ENCODE measurements at regions of chr18 and their contacts with region 1.

Region 1: GRCh38 chr18:49813319-49814146 is at the start of gene ACAA2:
- DNase-seq: peak; percentile 80
- H3K4me3 Mint-ChIP-seq: peak within 1 kb of the TSS; percentile 97
- H3K27ac Mint-ChIP-seq: peak within 1 kb of the TSS; percentile 98
- H3K4me1 Mint-ChIP-seq: peaks cover 61% of the 10 kb centered on the region
- H3K27me3 Mint-ChIP-seq: no peaks in the 10 kb centered on the region
- total RNA-seq, gene ACAA2: 74.3 and 74.6 TPM in 2 replicates

Region 2: DNA sequence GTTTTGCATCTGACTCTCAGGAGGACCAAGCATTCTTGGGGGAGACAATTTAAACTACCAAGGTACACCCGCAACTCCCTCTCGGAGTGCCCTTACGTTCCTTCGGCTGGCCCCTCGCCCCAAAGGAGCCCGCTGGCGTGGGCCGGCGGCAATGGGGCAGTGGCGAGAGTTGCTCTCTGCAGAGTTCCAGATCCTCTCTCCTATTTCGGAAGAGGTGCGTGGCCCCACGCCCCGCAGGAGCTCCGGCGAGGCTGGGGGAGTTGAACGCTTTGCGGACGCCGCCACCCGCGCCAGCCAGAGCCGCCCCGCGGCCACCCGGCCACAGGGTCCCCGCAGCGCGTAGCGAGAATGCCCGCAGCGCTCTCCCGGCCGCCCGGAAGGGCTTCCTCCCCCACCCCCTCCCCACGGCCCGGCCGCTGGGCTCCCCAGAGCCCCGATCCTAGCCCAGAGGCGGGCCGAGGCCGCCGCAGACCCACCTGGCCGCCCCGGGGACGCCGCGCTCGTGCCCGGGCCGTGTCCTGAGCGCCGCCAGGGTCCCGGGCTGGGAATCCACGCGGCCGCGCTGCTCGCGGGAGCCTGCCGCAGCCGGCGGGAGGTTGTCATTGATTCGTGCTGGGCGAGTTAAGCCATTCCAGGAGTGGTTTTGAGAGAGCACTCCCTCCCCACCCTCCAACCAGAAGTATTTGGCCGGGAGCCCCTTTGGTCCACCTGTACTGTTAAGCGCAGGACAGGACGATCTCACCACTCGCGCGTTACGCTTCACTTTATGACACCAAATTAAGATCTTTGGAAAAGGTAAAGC is 1676.8 kb before region 1 on chr18:
- intact Hi-C with region 1: loop called (anchors 10 kb)
- DNase-seq: no peak
- H3K4me3 Mint-ChIP-seq: peak overlapping the region; percentile 72
- H3K27ac Mint-ChIP-seq: peak overlapping the region; percentile 71
- H3K4me1 Mint-ChIP-seq: peaks cover 35% of the 10 kb centered on the region
- H3K27me3 Mint-ChIP-seq: peaks cover 62% of the 10 kb centered on the region

Region 3: DNA sequence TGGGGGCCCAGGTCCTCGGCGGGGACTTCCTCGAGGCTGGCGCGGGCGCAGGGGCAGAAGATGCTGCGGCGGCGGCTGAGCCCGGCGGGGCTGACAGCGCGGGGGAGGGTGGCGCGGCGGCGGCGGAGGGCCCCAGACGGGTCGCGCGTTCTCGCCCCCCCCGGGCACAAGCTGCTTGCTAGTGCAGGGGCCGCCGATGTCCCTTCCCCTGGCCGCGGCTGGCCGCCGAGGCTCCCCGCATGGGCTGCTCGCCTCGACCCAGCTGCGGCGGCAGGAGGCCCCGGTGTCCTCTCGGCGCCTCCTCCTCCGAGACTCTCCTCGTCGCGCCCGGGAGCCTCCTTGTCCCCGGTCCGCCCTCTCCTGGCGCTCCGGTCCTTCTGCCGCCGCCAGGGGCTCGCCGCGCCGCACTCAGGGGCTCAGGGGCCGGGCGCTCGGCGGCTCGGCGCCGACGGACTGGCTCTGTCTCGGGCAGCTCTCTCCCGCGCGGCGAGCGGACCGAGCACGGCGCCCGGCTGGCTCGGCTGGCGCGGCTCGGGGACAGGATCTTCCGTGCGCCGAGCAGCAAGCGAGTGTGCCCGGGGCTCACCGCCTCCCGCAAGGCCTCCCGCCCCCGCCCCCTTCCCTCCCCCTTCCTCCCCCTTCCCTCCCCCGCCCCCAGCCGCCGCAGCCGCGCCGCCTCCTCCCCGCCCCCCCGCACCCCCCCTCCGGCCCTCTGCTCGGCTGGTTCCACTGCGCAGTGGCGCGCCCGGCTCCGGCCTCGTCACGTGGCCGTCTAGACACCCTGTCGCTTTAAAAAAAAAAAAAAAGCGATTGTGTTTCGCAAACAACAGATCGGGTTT is 861.9 kb before region 1 on chr18:
- intact Hi-C with region 1: loop called (anchors 5 kb)
- DNase-seq: peak; percentile 68
- H3K4me3 Mint-ChIP-seq: peak overlapping the region; percentile 98
- H3K27ac Mint-ChIP-seq: peak overlapping the region; percentile 96
- H3K4me1 Mint-ChIP-seq: peaks cover 45% of the 10 kb centered on the region
- H3K27me3 Mint-ChIP-seq: peaks cover 14% of the 10 kb centered on the region

Region 4: DNA sequence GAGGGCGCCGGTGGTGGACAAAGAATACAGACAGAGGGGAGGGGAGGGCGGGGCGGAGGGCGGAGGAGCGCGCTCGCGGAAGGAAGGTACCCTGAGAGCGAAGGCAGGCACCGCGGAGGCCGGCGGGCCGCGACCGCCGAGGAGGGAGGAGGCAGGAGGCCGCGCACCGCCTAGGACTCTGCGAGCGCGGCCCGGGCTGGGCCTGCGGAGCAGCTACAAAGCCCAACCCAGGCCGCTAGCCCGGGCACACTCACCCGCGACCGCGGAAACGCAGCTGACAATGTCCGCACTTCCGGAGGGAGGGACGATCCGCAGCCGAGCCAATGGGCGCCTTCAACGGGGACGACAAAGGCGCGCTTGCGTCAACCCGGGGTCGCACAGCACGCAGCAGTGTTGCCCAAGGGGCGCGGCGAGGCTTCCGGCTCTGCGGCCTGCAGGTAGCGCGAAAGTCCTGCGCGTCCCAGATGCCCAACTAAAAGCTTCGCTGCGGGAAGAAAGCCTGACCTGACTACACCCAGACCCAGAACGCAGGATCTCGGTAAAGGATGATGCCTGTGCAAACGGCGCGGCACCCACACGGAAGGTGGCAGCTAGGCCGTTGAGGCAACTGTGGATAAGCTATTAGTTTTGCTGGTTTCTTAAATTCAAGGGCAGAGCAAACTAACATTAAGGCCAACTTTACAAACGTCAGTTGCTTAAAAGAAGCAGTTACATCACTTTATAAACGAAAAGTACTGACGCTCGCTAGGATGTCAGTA is 326.4 kb before region 1 on chr18 and contains the start of gene C18orf32:
- intact Hi-C with region 1: loop called (anchors 1 kb)
- DNase-seq: peak; percentile 92
- H3K4me3 Mint-ChIP-seq: peak within 1 kb of the TSS; percentile 93
- H3K27ac Mint-ChIP-seq: peak within 1 kb of the TSS; percentile 98
- H3K4me1 Mint-ChIP-seq: peaks cover 53% of the 10 kb centered on the region
- H3K27me3 Mint-ChIP-seq: no peaks in the 10 kb centered on the region
- total RNA-seq, gene C18orf32: 28.7 and 31.2 TPM in 2 replicates

Region 5: GRCh38 chr18:49795612-49796552 is 17.7 kb before region 1 on chr18:
- intact Hi-C with region 1: loop called (anchors 2 kb)
- DNase-seq: no peak
- H3K4me3 Mint-ChIP-seq: peak overlapping the region; percentile 56
- H3K27ac Mint-ChIP-seq: peak overlapping the region; percentile 65
- H3K4me1 Mint-ChIP-seq: peaks cover 29% of the 10 kb centered on the region
- H3K27me3 Mint-ChIP-seq: no peaks in the 10 kb centered on the region

Region 6: GRCh38 chr18:49944663-49945062 is 131.1 kb after region 1 on chr18:
- intact Hi-C with region 1: no loop called
- DNase-seq: no peak
- H3K4me3 Mint-ChIP-seq: no peak overlapping the region
- H3K27ac Mint-ChIP-seq: peak overlapping the region; percentile 18
- H3K4me1 Mint-ChIP-seq: peaks cover 10% of the 10 kb centered on the region
- H3K27me3 Mint-ChIP-seq: peaks cover 7% of the 10 kb centered on the region

Region 7: GRCh38 chr18:50281295-50281971 is 467.9 kb after region 1 on chr18 and contains the start of gene MBD1:
- intact Hi-C with region 1: loop called (anchors 5 kb)
- DNase-seq: peak; percentile 94
- H3K4me3 Mint-ChIP-seq: peak within 1 kb of the TSS; percentile 91
- H3K27ac Mint-ChIP-seq: peak within 1 kb of the TSS; percentile 87
- H3K4me1 Mint-ChIP-seq: peaks cover 40% of the 10 kb centered on the region
- H3K27me3 Mint-ChIP-seq: no peaks in the 10 kb centered on the region
- total RNA-seq, gene MBD1: 94.8 and 95.2 TPM in 2 replicates

Region 8: DNA sequence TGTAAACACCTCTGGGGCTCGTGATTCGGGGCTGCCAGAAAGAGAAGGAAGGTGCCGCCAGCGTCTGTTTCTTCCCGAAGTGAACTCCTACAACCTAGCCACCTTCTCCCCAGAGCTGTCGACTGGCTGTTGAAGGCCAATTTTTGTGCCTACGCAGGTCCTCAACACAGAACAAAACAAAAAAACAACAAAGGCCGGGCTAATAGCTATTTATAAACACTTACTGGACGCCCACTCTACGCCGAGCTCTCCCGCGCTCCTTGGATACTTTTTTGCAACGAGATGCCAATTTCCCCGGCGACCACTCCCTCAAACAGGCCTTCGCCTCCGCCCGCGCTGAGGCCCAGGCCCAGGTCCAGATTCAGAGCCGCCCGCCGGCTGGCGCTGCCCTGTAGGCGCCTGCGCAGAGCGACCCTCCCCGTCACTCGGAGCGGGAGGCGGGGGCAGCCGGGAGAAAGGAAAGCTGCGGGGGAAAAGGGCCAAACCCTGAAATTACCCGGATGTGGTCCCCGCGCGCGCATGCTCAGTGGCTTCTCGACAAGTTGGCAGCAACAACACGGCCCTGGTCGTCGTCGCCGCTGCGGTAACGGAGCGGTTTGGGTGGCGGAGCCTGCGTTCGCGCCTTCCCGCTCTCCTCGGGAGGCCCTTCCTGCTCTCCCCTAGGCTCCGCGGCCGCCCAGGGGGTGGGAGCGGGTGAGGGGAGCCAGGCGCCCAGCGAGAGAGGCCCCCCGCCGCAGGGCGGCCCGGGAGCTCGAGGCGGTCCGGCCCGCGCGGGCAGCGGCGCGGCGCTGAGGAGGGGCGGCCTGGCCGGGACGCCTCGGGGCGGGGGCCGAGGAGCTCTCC is 1216.4 kb after region 1 on chr18 and contains the start of gene SMAD4:
- intact Hi-C with region 1: loop called (anchors 2 kb)
- DNase-seq: peak; percentile 97
- H3K4me3 Mint-ChIP-seq: peak within 1 kb of the TSS; percentile 99
- H3K27ac Mint-ChIP-seq: peak within 1 kb of the TSS; percentile 96
- H3K4me1 Mint-ChIP-seq: peaks cover 55% of the 10 kb centered on the region
- H3K27me3 Mint-ChIP-seq: no peaks in the 10 kb centered on the region
- total RNA-seq, gene SMAD4: 84.4 and 88.7 TPM in 2 replicates